ENCODE measurements at regions of chr16 and their contacts with region 1.

Region 1: GRCh38 chr16:81366316-81366932 is 51.7 kb downstream of the GAN start:
- DNase-seq: no peak
- ATAC-seq: peak; percentile 72
- H3K4me3 Mint-ChIP-seq: no peak overlapping the region
- H3K27ac Mint-ChIP-seq: no peak overlapping the region
- H3K4me1 Mint-ChIP-seq: peaks cover 13% of the 10 kb centered on the region
- H3K27me3 Mint-ChIP-seq: no peaks in the 10 kb centered on the region

Region 2: DNA sequence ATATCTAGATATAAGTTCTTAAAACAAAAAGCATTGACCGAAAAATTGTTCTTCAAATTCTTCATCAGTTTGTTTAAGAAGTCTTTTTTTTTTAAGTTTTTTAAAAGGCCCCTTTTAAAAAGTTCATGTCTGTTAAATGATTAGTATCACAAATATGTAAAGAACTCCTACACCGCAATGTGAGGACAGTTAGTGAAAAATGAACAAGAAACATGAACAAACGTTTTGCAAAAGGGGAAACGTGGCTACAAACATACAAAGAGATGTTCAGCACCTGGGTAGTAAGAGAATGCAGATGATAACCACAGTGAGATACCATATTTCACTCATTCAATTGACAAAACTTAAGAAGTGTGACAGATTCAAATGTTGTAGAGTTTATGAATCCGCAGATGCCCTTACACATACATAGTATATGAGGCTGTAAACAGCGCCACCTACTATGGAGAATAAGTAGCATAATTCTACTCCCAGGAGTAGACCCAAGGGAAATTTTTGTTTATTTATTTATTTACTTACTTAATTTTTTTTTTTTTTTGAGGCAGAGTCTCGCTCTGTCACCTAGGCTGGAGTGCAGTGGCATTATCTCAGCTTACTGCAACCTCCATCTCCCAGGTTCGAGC is 16.3 kb before region 1 on chr16:
- CTCF ChIA-PET with region 1: interaction called, 15 read pairs
- DNase-seq: no peak
- ATAC-seq: no peak
- H3K4me3 Mint-ChIP-seq: no peak overlapping the region
- H3K27ac Mint-ChIP-seq: no peak overlapping the region
- H3K4me1 Mint-ChIP-seq: peaks cover 8% of the 10 kb centered on the region
- H3K27me3 Mint-ChIP-seq: no peaks in the 10 kb centered on the region

Region 3: GRCh38 chr16:81415751-81416150 is 49.3 kb after region 1 on chr16:
- CTCF ChIA-PET with region 1: no interaction called
- DNase-seq: no peak
- ATAC-seq: no peak
- H3K4me3 Mint-ChIP-seq: no peak overlapping the region
- H3K27ac Mint-ChIP-seq: no peak overlapping the region
- H3K4me1 Mint-ChIP-seq: no peaks in the 10 kb centered on the region
- H3K27me3 Mint-ChIP-seq: peaks cover 12% of the 10 kb centered on the region

Region 4: DNA sequence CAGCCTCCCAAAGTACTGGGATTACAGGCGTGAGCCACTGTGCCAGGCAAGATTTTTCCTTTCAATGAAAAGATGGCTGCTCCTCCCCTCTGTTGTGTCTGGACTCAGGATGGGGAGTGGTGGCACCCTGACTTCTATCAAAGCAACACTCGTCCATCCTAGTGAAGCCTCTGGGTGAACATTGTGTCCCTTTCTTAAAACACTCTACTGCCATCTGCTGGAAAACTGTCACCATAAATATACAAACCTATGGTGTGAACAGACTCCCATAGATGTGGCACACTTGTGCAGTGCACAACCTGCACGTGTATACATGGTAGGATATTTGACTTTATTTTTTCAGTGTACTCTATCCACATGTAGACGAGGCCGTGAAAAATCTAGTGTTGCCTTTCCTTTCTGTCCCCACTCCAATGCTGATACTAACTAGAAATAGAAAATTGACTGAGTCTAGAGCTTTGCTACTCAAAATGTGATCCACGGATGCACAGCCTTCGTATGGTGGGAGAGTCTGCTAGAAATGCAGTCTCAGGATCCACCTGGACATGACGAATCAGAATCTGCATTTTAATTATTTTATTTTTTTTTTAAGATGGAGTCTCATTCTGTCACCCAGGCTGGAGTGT is 356.8 kb after region 1 on chr16:
- CTCF ChIA-PET with region 1: interaction called, 28 read pairs
- DNase-seq: peak; percentile 51
- ATAC-seq: peak; percentile 80
- H3K4me3 Mint-ChIP-seq: no peak overlapping the region
- H3K27ac Mint-ChIP-seq: no peak overlapping the region
- H3K4me1 Mint-ChIP-seq: peaks cover 16% of the 10 kb centered on the region
- H3K27me3 Mint-ChIP-seq: peaks cover 6% of the 10 kb centered on the region

Region 5: DNA sequence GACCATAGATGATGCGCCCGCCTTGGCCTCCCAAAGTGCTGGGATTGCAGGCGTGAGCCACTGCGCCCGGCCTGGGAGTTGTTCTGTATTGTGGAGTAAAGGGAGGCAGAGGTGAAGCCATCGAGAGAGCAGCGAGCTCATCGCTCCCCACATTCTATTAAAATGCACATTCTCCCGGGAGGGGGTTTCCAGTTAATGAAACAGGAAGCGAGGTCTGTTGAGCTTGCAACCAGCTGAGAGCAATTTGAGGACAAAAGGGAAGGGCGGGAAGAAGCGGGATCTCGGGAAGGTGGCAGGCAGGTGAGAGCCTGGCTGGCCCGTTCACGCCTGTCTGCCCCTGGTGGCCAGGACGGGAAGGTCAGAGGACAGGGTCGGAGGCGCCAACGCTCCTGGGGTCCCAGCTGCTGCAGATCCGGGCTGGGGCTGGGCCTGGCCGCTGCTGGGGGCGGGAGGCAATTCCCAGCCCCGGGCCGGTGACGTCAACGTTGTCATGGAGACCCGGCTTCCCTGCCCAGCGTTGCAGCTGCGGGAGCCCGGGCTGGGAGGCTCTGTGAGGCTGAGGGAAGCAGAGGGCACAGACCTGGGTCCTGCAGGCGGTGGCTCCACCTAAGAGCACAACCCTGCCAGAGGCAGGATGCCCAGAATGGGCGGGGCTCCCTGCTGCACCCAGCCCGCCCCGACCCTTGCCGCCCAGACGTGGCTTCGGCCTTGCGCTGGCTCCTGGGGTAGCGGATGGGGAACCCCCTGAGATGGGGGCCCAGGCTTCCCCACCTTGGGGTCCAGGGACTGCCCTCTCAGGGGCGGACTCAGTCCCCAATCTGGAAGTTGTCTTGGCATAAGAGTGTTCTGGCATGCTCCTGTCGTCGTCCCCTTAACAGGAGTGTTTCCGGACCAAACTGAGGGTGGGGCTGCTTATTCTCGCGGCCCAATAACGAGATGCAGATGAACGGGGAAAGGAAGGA is 363.9 kb after region 1 on chr16:
- CTCF ChIA-PET with region 1: interaction called, 17 read pairs
- DNase-seq: peak; percentile 71
- ATAC-seq: peak; percentile 92
- H3K4me3 Mint-ChIP-seq: peak overlapping the region; percentile 72
- H3K27ac Mint-ChIP-seq: peak overlapping the region; percentile 79
- H3K4me1 Mint-ChIP-seq: peaks cover 17% of the 10 kb centered on the region
- H3K27me3 Mint-ChIP-seq: no peaks in the 10 kb centered on the region

Measured in activated CD8-positive, alpha-beta memory T cell treated with anti-CD3 and anti-CD28 coated beads, Interleukin-2, amount 10 ng/mL, durations not matched to agents 7 days and 5 days (primary cell).